Left cardiac atrium (tissue), 4 donors: ENCODE measurements at regions of chr14 and their contacts with region 1.

Region 1: GRCh38 chr14:86402547-86402946 is 872.6 kb downstream of the FLRT2 start:
- DNase-seq: no peak
- ATAC-seq: no peak

Region 2: DNA sequence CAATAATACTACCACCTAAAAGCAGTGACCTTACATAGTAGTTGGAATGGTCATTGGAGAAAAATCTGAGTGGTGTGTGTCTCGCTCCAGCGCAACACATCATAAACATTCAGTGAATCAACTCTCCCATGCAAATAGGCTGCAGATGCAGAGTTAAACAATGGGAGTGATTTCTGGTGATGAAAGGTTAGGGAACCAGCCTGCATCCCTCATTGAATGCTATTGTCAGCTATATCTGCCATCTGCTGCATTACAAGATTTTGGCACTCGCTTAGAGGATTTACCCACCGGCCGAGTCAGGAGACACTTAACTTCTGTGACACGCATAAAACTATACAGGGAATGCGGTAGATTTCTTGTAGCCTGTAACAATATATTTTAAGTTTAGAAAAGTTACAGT is 28.3 kb after region 1 on chr14:
- intact Hi-C with region 1: loop called in 1 of 2 experiments (anchors 2 kb)
- DNase-seq: no peak
- ATAC-seq: no peak

Region 3: DNA sequence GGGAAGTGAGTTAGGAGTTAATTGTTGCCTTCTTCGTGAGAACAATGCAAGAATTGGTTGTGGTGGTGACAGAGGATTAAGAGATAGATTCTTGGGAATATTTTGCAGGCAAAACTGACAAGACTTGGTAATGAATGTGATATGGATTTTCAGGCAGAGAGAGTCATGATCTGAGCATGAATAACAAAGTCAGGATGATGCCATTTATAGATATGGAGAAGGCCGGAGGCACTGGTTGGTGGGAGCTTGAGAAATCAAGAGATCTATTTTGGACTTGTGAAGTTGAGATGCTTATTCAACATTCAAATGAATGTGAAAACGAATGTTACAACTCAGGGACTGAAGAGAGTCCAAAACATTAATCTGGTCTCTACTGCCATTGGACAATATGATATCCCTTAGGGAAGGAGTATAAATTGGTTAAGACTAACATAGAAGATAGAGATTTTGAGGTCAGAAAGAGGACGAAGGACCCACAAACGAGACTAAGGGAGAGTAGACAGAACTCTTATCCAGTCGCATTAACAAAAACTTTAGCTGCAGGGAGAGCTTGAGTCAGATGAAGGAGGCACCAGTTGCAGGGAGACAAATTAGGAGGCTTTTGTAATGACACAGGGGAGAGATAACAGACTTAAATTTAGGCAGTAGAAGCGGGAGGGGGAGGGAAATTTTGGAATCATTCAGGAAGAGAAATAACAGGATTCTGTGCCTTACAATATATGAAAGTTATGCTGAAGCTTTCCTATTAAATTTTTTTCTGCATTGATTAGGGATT is 499.8 kb after region 1 on chr14:
- intact Hi-C with region 1: no loop called
- DNase-seq: no peak
- ATAC-seq: no peak